ENCODE measurements at regions of chr1 and their contacts with region 1.

Region 1: DNA sequence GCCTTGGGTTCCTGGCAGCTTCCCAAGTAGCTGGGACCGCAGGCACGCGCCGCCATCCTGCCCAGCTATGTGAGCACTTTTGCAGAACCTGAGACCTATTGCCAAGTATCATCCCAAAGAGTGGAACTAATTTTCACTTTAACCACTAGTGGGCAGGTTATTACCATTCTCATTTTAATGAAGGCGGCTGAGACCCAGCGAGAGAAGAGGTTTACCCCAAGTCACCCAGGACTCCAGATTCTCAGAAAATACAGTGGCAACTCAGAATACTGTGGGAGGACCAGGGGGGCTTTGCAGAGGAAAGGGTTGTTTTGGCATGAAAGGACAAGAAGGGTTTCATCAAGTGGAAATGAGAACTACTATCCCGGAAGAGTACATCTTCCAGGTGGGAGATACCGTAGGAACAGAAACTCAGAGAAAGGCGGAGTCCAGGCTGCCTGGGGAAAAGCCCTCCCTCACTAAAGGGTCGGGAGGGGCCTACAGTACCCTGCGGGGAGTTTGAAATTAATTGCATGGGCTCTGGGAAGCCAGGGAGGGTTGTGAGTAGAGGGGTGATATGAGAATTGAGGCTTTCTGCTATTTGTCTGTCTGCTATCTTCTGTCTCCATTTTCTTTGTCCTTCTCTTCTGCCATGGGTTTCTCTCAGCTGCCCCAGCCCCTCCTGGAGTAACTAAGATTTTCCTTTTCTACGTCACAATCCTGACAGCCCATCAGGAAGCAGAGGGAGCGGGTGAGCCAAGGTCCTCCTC is 7.2 kb upstream of the SEMA4A start:
- DNase-seq: peak; percentile 80
- ATAC-seq: peak; percentile 67

Region 2: DNA sequence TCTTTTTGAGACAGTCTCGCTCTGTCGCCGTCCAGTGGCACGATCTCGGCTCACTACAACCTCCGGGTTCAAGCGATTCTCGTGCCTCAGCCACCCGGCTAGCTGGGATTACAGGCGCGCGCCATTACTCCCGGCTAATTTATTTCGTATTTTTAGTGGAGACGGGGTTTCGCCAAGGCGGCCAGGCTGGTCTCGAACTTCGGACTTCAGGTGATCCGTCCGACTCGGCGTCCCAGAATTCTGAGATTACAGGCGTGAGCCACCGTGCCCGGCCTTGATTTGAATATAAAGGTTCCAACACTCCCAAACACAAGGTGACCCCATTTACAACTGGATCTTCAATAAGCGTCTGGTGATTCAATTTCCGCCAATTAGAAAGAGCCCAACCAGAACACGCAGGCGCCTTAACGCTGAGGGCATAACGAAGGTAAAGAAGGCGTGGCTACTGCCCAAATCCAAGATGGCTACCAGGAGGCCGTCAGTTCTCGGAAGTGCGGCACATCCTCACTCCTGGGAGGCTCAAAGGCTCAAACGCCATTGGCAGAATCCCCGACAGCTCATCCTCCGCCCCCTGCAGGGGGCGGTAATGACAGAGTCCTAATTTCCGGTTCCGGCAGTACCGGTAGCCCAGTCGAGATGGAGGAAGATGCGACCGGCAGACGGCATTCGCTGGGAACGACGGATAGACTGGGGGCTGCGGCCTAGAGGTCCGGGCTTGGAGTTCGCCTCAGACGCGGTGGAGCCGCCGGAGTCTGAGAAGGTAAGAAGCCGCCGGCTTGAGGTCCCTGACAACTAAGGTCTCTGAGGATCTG is 47.5 kb after region 1 on chr1 and contains the start of gene SLC25A44:
- intact Hi-C with region 1: loop called (anchors 10 kb)
- DNase-seq: peak; percentile 96
- ATAC-seq: peak; percentile 99
- total RNA-seq, gene SLC25A44: 15.8 TPM

Measured in Right ventricle myocardium superior (tissue), 1 donor.